ENCODE measurements at regions of chr18 and their contacts with region 1.

Region 1: GRCh38 chr18:25351777-25352628 is at the start of gene ZNF521:
- DNase-seq: peak; percentile 40
- ATAC-seq: peak; percentile 96
- H3K4me3 ChIP-seq: peak within 1 kb of the TSS; percentile 63 to 76 (median 74)
- H3K27ac ChIP-seq: no peak within 1 kb of the TSS
- H3K4me1 ChIP-seq: no peaks in the 10 kb centered on the region
- H3K27me3 ChIP-seq: peaks cover 0 to 8% of the 10 kb centered on the region in 2 experiments; a peak in 1 of 5 replicates
- CTCF ChIP-seq: no peak
- EP300 ChIP-seq: no peak
- POLR2A ChIP-seq: no peak
- RAD21 ChIP-seq: no peak
- total RNA-seq, gene ZNF521: 0.02 TPM in 1 of 2 replicates, not detected in the other

Region 2: GRCh38 chr18:25253136-25253535 is 98.9 kb before region 1 on chr18:
- CTCF ChIA-PET with region 1: no interaction called
- POLR2A ChIA-PET with region 1: no interaction called
- in situ Hi-C with region 1: no loop called
- intact Hi-C with region 1: no loop called
- DNase-seq: no peak
- ATAC-seq: no peak
- H3K4me3 ChIP-seq: no peak overlapping the region
- H3K27ac ChIP-seq: no peak overlapping the region
- H3K4me1 ChIP-seq: no peaks in the 10 kb centered on the region
- H3K27me3 ChIP-seq: no peaks in the 10 kb centered on the region; a peak in 1 of 5 replicates
- CTCF ChIP-seq: no peak
- EP300 ChIP-seq: no peak
- POLR2A ChIP-seq: no peak
- RAD21 ChIP-seq: no peak

Region 3: DNA sequence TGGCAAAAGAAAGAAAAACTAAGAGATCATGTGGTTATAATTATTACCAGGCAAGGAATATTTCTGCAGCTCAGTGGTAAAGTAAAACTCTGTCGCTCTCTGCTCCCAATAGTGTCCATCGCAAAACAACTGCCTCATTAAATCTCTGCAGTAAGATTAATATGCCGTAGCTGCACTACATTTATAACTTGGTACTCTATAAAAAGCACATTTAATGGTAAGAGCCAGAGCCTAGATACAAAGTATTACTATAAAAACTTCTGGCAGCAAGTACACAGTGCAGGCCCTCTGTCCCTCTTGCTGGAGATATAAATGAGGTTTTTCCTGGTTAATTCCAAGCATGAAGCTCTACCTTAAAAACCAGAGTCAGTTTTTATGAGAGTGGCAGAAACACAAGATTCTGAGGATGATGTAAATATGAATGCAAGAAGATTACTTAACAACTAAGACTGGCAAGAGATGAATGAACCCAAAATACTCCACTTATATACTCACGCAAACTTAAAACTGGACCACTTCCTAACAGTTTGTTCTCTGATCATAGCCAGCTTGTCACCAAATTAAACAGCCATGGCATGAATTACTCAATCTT is 25.5 kb before region 1 on chr18:
- CTCF ChIA-PET with region 1: no interaction called
- POLR2A ChIA-PET with region 1: no interaction called
- in situ Hi-C with region 1: no loop called
- intact Hi-C with region 1: no loop called
- DNase-seq: no peak
- ATAC-seq: no peak
- H3K4me3 ChIP-seq: no peak overlapping the region
- H3K27ac ChIP-seq: no peak overlapping the region
- H3K4me1 ChIP-seq: no peaks in the 10 kb centered on the region
- H3K27me3 ChIP-seq: no peaks in the 10 kb centered on the region
- CTCF ChIP-seq: no peak
- EP300 ChIP-seq: no peak
- POLR2A ChIP-seq: no peak
- RAD21 ChIP-seq: no peak

Region 4: DNA sequence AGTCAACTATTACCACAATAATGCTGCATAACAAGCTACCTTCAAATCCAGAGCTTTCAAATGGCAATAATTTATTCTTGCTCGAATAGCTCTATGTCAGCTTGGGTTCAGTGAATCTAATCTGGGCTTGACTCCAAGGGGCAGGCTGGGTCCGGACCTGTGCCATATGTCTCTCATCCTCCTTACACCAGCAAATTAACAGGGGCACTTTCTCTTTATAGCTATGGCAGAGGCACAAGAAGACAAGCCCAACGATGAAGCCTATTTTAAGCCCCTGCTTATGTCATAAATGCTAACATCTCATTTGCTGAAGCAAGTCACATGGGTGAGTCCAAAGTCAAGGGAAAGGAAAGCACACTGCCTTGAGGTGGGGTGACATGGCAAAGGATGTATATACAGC is 13.2 kb after region 1 on chr18:
- CTCF ChIA-PET with region 1: no interaction called
- POLR2A ChIA-PET with region 1: no interaction called
- in situ Hi-C with region 1: no loop called
- intact Hi-C with region 1: no loop called
- DNase-seq: no peak
- ATAC-seq: no peak
- H3K4me3 ChIP-seq: no peak overlapping the region
- H3K27ac ChIP-seq: no peak overlapping the region
- H3K4me1 ChIP-seq: no peaks in the 10 kb centered on the region
- H3K27me3 ChIP-seq: no peaks in the 10 kb centered on the region
- CTCF ChIP-seq: no peak
- EP300 ChIP-seq: no peak
- POLR2A ChIP-seq: no peak
- RAD21 ChIP-seq: no peak

Region 5: DNA sequence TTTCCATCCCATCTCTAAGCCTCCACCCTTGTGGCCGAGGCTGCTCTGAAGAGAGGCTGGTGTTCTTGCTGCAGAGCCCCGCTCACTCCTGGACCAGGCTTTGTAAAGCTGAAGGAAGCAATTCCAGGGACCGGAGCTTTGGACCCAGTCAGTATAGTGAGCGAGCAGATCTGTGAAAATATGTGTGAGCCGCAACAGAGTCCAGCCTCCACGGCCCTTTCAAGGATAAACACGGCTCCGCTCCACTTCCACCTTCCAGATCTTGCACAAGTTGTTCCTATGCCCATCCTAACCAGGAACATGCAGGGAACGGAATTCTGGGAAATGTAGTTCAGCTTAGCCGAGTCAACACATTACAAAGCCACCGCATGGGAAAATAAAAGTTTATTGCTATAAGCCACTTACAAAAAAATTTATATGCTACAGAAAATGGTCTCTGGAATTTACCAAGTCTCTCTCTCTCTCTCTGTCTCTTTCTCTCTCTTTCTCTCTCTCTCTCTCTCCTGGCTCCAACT is 151.6 kb after region 1 on chr18:
- CTCF ChIA-PET with region 1: no interaction called
- POLR2A ChIA-PET with region 1: no interaction called
- in situ Hi-C with region 1: no loop called
- intact Hi-C with region 1: loop called (anchors 2 kb)
- DNase-seq: peak; percentile 17
- ATAC-seq: peak; percentile 88
- H3K4me3 ChIP-seq: no peak overlapping the region; a peak in 1 of 6 replicates
- H3K27ac ChIP-seq: no peak overlapping the region
- H3K4me1 ChIP-seq: no peaks in the 10 kb centered on the region
- H3K27me3 ChIP-seq: no peaks in the 10 kb centered on the region
- CTCF ChIP-seq: no peak
- EP300 ChIP-seq: no peak
- POLR2A ChIP-seq: no peak
- RAD21 ChIP-seq: no peak

Region 6: GRCh38 chr18:25650201-25650941 is 298.4 kb after region 1 on chr18:
- CTCF ChIA-PET with region 1: no interaction called
- POLR2A ChIA-PET with region 1: no interaction called
- in situ Hi-C with region 1: no loop called
- intact Hi-C with region 1: no loop called
- DNase-seq: peak; percentile 67
- ATAC-seq: peak; percentile 96
- H3K4me3 ChIP-seq: no peak overlapping the region
- H3K27ac ChIP-seq: no peak overlapping the region
- H3K4me1 ChIP-seq: peaks cover 22% of the 10 kb centered on the region
- H3K27me3 ChIP-seq: no peaks in the 10 kb centered on the region; a peak in 1 of 5 replicates
- CTCF ChIP-seq: no peak
- EP300 ChIP-seq: no peak
- POLR2A ChIP-seq: no peak
- RAD21 ChIP-seq: no peak